PC-9 (cell line): ENCODE measurements at regions of chr2 and their contacts with region 1.

Region 1: DNA sequence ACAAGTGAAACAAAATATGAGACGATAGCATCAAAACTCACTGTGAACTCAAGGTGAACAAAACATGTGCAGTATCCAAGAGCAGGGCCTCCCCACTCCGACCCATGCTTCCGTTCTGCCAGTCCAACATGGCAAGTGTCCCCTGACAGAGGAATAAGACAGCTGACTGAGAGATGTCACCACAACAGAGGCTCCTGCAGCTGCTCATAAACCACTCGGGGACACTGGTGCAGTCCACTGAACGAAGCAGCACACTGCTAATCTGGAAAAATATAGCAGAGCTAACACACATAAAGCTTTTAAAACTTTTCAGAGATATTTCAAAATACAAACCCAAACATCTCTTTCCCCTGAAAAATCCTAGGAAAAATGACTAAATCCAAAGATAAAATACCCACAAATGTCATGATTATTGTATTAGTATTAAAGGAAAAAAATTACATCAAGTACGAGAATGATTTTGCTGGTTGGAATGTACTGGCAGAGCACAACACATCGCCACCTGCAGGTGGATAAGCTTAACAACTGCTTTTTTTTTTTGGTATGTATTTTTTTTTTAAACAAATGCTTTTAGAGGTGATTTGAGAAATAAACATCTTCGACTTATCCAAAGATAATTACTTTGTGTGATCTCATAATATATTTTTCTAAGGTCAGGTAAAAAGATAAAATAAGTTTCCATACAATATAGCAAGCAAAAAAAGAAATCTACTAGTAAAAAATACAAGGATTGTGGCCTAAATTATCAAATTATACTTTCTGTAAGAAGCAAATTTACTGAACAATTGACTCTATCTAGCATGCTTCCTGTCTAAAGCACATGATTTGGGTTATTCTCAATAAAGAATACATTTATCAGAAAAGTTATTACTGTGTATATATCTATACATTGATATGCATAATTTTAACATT is 18.6 kb downstream of the THADA start:
- DNase-seq: peak; percentile 6 to 65
- H3K4me3 ChIP-seq: no peak overlapping the region
- H3K27ac ChIP-seq: no peak overlapping the region
- H3K4me1 ChIP-seq: no peaks in the 10 kb centered on the region
- H3K27me3 ChIP-seq: no peaks in the 10 kb centered on the region
- CTCF ChIP-seq: peak; percentile 87

Region 2: GRCh38 chr2:44450806-44451205 is 873.6 kb after region 1 on chr2:
- CTCF ChIA-PET with region 1: no interaction called
- POLR2A ChIA-PET with region 1: interaction called, 12 read pairs
- intact Hi-C with region 1: no loop called
- DNase-seq: no peak
- H3K4me3 ChIP-seq: no peak overlapping the region
- H3K27ac ChIP-seq: no peak overlapping the region
- H3K4me1 ChIP-seq: no peaks in the 10 kb centered on the region
- H3K27me3 ChIP-seq: no peaks in the 10 kb centered on the region
- CTCF ChIP-seq: no peak

Region 3: GRCh38 chr2:44981136-44982108 is 1404.2 kb after region 1 on chr2:
- CTCF ChIA-PET with region 1: no interaction called
- POLR2A ChIA-PET with region 1: no interaction called
- intact Hi-C with region 1: no loop called
- DNase-seq: peak; percentile 62 to 76
- H3K4me3 ChIP-seq: no peak overlapping the region
- H3K27ac ChIP-seq: no peak overlapping the region
- H3K4me1 ChIP-seq: no peaks in the 10 kb centered on the region
- H3K27me3 ChIP-seq: no peaks in the 10 kb centered on the region
- CTCF ChIP-seq: peak; percentile 96